ENCODE measurements at regions of chr17 and their contacts with region 1.

Region 1: DNA sequence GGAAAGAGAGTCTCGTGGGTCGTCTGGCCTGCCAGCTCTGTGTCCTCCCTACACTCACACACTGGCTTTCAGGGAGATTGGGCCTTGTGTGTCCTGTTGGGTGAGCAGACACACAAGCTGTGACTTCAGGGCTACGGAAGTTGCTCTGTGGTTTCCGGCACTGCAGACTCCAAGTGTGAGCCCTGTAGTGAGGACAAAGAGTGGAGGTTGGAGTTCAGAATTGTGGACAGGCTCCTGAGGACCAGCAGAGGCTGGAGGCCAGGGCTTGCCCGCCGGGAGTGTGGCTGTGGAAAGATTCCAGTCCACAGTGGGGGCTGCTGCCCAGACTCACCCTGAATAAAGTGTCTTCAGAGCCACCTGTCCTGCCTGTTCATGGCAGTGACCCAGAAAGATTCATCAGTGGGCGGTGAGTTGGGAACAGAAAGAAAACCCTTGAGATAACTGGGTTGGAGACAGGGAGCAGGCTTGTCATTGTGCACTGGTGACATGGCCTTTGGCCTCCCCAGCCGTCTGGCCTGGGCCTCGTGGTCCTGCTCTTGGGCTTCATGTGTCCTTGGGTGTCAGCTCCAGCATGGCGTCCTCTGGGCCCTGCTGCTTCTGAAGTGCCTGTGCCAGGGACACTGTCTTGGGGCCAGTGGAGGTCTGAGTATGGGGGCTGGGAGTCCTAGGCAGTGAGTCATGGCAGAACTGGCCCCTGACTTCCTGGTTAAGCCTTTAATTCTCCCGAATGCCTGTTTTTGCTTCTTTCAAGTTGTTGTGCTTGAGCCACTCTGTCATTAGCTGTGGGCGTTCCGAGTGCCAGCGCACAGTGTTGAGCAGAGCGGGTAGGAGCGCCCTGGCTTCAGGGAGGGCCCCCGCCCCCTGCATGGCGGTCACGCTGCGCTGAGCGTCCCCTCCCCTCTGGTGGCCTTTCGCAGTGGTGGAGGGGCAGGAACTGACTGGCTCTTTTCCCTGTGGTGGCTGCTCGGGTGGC is 19.9 kb upstream of the ZNF750 start:
- DNase-seq: peak in 1 of 2 donors; percentile 60
- ATAC-seq: peak in 1 of 2 donors; percentile 47
- H3K4me3 ChIP-seq: no peak overlapping the region
- H3K27ac ChIP-seq: peak overlapping the region; percentile 37 to 70 (median 56)
- H3K4me1 ChIP-seq: peaks cover 17 to 28% of the 10 kb centered on the region in 2 donors
- H3K27me3 ChIP-seq: no peaks in the 10 kb centered on the region
- CTCF ChIP-seq: no peak
- POLR2A ChIP-seq: peak in 1 of 2 donors; percentile 9

Region 2: DNA sequence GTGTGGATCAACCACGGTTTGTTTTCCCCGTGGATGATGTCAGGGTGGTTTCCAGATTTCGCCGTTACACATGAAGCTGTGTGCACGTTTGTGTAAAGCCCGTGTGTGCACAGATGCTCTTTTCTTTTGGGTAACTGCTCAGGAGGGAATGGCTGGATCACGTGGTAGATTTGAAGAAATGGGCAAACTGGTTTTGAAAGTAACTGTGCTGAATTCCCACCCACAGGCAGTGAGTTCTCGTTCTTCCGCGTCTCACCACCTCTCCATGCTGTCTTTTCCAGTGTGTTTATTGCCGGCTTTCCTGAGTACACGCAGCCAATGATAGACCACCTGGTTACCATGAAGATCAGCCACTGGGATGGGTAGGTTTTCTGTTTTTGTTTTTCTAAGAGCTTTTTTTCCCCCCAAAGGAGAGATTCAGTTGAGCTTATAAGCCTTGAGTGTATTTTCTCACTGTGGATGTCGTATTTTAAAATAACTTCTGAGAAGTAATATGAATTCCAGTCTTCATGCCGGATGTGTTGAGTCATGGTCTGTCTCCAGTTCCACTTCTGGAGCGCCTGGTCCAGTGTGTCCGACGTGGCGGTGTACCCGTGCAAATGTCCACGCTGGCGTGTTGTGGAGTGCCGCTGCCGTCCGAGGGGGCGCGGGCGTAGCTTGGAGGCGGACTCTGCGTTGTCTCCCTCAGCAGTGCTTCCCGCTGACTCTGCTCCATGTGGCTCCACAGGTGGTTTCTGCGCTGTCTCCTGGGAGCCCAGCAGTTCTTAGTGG is 40.8 kb after region 1 on chr17:
- in situ Hi-C with region 1: loop called in 1 of 4 experiments (anchors 5 kb)
- intact Hi-C with region 1: no loop called
- DNase-seq: no peak
- ATAC-seq: peak; percentile 27 to 55
- H3K4me3 ChIP-seq: peak overlapping the region in 2 of 4 donors; percentile 2 to 28
- H3K27ac ChIP-seq: peak overlapping the region in 3 of 4 donors; percentile 4 to 62 (median 18)
- H3K4me1 ChIP-seq: peaks cover 5 to 7% of the 10 kb centered on the region in 2 donors
- H3K27me3 ChIP-seq: no peaks in the 10 kb centered on the region
- CTCF ChIP-seq: no peak
- POLR2A ChIP-seq: no peak

Region 3: GRCh38 chr17:82911822-82912221 is 52.1 kb after region 1 on chr17:
- in situ Hi-C with region 1: no loop called
- intact Hi-C with region 1: no loop called
- DNase-seq: no peak
- ATAC-seq: no peak
- H3K4me3 ChIP-seq: no peak overlapping the region
- H3K27ac ChIP-seq: peak overlapping the region; percentile 83 to 93 (median 86)
- H3K4me1 ChIP-seq: peaks cover 17 to 22% of the 10 kb centered on the region in 2 donors
- H3K27me3 ChIP-seq: no peaks in the 10 kb centered on the region
- CTCF ChIP-seq: no peak
- POLR2A ChIP-seq: no peak

Region 4: GRCh38 chr17:83037084-83037873 is 177.6 kb after region 1 on chr17:
- in situ Hi-C with region 1: no loop called
- intact Hi-C with region 1: no loop called
- DNase-seq: no peak
- ATAC-seq: no peak
- H3K4me3 ChIP-seq: no peak overlapping the region
- H3K27ac ChIP-seq: no peak overlapping the region
- H3K4me1 ChIP-seq: no peaks in the 10 kb centered on the region
- H3K27me3 ChIP-seq: no peaks in the 10 kb centered on the region
- CTCF ChIP-seq: no peak
- POLR2A ChIP-seq: no peak

Measured in gastrocnemius medialis (tissue), 4 donors.